ENCODE measurements at regions of chr6 and their contacts with region 1.

Region 1: DNA sequence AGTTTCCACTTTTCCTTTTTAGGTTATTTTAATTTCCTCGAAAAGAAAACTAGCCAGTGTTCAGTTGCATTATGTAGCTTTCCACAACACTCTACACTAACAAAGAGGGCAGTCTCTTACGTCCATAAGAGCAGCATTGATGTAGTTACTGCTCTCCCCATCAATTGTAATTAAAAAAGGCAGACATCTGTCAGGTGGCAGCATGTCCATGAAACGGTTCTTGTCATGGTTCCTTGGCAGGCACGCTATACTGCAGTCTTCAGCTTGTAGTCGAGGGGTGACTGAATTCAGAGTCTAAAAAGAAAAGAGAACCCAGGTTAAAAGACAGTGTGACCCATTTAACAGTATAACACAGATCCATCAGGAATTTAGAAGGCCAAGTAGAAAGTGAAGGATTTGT is 80.1 kb upstream of the THEMIS start:
- DNase-seq: no peak
- H3K4me3 Mint-ChIP-seq: no peak overlapping the region
- H3K27ac Mint-ChIP-seq: no peak overlapping the region
- H3K4me1 Mint-ChIP-seq: peaks cover 19% of the 10 kb centered on the region
- H3K27me3 Mint-ChIP-seq: no peaks in the 10 kb centered on the region

Region 2: GRCh38 chr6:127992144-127992543 is 11.1 kb after region 1 on chr6:
- CTCF ChIA-PET with region 1: interaction called, 3 read pairs
- intact Hi-C with region 1: loop called (anchors 1 kb)
- DNase-seq: no peak
- H3K4me3 Mint-ChIP-seq: no peak overlapping the region
- H3K27ac Mint-ChIP-seq: no peak overlapping the region
- H3K4me1 Mint-ChIP-seq: peaks cover 16% of the 10 kb centered on the region
- H3K27me3 Mint-ChIP-seq: no peaks in the 10 kb centered on the region

Region 3: GRCh38 chr6:128036808-128037570 is 56.0 kb after region 1 on chr6:
- CTCF ChIA-PET with region 1: no interaction called
- intact Hi-C with region 1: no loop called
- DNase-seq: no peak
- H3K4me3 Mint-ChIP-seq: no peak overlapping the region
- H3K27ac Mint-ChIP-seq: no peak overlapping the region
- H3K4me1 Mint-ChIP-seq: peaks cover 5% of the 10 kb centered on the region
- H3K27me3 Mint-ChIP-seq: no peaks in the 10 kb centered on the region

Measured in activated naive CD4-positive, alpha-beta T cell treated with anti-CD3 and anti-CD28 coated beads for 36 hours (primary cell).